ENCODE measurements at regions of chr2 and their contacts with region 1.

Region 1: DNA sequence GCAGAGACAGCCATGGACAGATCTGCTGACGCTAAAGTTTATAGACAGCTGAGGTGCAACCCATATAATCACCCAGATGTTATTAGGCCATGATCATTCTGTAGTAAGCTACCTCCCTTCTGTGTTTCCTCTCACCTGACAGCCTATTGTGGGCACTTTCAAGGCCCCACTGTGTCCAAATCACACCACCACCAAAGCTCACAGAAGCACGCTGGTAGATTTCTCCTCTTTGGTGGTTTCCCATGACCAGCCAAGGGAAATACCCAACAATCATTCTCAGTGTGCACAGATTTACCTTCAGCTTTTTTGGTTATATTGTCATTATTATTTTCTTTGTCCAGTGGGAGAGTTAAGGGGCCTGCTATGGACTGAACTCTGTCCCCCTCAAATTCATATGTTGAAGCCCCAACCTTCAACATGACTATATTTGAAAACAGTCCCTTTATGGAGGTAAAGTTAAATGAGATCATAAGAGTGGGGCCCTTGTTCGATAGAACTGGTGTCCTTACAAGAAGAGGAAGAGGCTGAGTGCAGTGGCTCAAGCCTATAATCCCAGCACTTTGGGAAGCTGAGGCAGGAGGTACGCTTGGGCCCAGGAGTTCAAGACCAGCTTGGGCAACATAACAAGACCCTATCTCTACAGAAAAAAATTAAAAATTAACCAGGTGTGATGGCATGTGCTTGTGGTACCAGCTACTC is 74.0 kb upstream of the MSH6 start:
- DNase-seq: peak; percentile 50
- ATAC-seq: peak; percentile 96
- H3K4me3 ChIP-seq: no peak overlapping the region
- H3K27ac ChIP-seq: peak overlapping the region; percentile 10; the same call in 1 of the 2 replicates
- H3K4me1 ChIP-seq: peaks cover 14% of the 10 kb centered on the region
- H3K27me3 ChIP-seq: no peaks in the 10 kb centered on the region
- CTCF ChIP-seq: no peak
- EP300 ChIP-seq: 0 out of 4 replicates have a peak, but pooled peaks of 1 of the 2 experiments have one; percentile 48
- POLR2A ChIP-seq: no peak
- RAD21 ChIP-seq: no peak

Region 2: GRCh38 chr2:47719099-47719498 is 10.1 kb after region 1 on chr2:
- CTCF ChIA-PET with region 1: interaction called, 6 read pairs
- POLR2A ChIA-PET with region 1: interaction called, 4 read pairs
- RAD21 ChIA-PET with region 1: interaction called, 6 read pairs
- SMC1A ChIA-PET with region 1: interaction called, 29 read pairs
- in situ Hi-C with region 1: no loop called
- intact Hi-C with region 1: no loop called
- DNase-seq: peak; percentile 44
- ATAC-seq: peak; percentile 73
- H3K4me3 ChIP-seq: no peak overlapping the region
- H3K27ac ChIP-seq: peak overlapping the region; percentile 7; the same call in 1 of the 2 replicates
- H3K4me1 ChIP-seq: peaks cover 45% of the 10 kb centered on the region
- H3K27me3 ChIP-seq: no peaks in the 10 kb centered on the region
- CTCF ChIP-seq: no peak
- EP300 ChIP-seq: peak; percentile 66 to 70; a peak in 2 of 4 replicates
- POLR2A ChIP-seq: no peak
- RAD21 ChIP-seq: no peak

Region 3: DNA sequence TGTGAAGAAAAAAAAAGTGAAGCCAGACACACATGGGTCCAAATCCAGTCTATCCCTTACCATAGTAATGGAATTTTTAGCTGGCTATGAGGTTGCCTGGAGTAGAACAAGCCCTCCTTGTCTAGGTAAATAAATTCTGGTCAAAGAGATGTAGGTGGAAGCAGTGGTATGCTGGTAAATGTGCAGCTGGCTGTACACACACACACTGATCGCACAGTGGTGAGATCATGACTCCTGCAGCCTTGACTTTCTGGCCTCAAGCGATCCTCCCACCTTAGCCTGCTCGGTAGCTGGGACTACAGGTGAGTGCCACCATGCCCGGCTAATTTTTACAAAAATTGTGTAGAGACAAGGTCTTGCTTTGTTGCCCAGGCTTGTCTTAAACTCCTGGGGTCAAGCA is 287.9 kb after region 1 on chr2:
- CTCF ChIA-PET with region 1: no interaction called
- POLR2A ChIA-PET with region 1: no interaction called
- RAD21 ChIA-PET with region 1: no interaction called
- SMC1A ChIA-PET with region 1: no interaction called
- in situ Hi-C with region 1: no loop called
- intact Hi-C with region 1: no loop called
- DNase-seq: no peak
- ATAC-seq: no peak
- H3K4me3 ChIP-seq: no peak overlapping the region
- H3K27ac ChIP-seq: no peak overlapping the region
- H3K4me1 ChIP-seq: no peaks in the 10 kb centered on the region
- H3K27me3 ChIP-seq: no peaks in the 10 kb centered on the region
- CTCF ChIP-seq: no peak
- EP300 ChIP-seq: no peak
- POLR2A ChIP-seq: no peak
- RAD21 ChIP-seq: no peak

Region 4: DNA sequence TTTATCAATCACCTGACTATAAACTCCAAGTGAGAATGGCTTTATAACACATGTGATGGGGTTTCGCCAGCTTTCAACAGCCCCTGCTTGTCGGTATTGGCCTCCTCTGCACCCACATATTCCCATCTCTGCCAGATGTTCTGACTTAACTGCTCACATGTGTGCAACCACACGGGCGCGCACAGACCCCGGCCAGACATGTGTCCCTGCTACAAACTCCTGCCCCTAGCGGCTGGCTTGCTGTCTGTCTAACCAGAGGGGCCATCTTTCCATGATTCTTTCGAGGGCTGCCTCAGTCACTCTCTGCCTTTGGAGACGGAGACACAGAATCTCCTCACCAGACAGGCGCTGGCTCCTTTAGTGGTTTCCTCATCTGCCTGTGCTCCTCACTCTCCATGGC is 836.3 kb after region 1 on chr2:
- CTCF ChIA-PET with region 1: no interaction called
- POLR2A ChIA-PET with region 1: no interaction called
- RAD21 ChIA-PET with region 1: no interaction called
- SMC1A ChIA-PET with region 1: no interaction called
- in situ Hi-C with region 1: no loop called
- intact Hi-C with region 1: no loop called
- DNase-seq: no peak
- ATAC-seq: no peak
- H3K4me3 ChIP-seq: no peak overlapping the region
- H3K27ac ChIP-seq: no peak overlapping the region
- H3K4me1 ChIP-seq: no peaks in the 10 kb centered on the region
- H3K27me3 ChIP-seq: no peaks in the 10 kb centered on the region
- CTCF ChIP-seq: no peak
- EP300 ChIP-seq: no peak
- POLR2A ChIP-seq: no peak
- RAD21 ChIP-seq: no peak

Measured in GM12878 (cell line).